ENCODE measurements at regions of chr4 and their contacts with region 1.

Region 1: DNA sequence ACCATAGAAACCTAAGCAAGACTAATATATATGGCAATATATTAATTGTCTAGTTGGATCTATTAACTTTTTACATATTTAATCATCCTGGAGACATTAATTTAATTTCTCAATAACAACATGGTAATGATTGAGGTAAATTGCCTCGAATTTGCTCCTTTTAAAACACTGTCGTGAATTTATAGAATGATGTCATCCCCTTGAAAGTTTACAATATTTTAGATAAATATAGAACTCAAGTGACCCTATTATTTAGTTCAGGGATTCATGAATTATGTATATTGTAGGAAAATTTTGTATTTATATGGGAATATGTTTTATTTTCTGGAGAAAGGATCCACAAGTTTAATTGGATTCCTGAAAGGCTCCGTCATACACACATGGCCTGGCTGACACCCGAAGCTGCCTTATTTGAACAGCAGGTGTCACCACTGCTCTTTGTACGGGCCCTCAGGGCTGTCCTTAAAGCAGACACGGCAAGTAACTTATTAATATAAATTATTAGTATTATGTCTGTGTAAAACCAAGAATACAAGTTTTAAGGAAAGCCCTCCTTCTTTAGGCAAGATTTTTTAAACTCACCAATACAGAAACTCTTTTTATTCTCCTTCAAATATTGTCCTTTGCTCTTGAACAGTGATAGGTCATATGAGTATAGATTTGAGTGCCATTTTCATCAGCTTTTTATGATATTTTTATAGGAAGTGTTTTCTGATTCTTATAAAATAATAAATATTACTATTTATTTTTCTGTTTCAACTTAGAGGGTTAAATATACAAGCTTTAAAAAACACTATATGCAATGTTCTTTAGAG is 1.9 kb upstream of the PLRG1 start:
- DNase-seq: peak; percentile 39
- ATAC-seq: peak; percentile 59
- H3K4me3 Mint-ChIP-seq: no peak overlapping the region
- H3K27ac Mint-ChIP-seq: peak overlapping the region; percentile 18
- H3K4me1 Mint-ChIP-seq: peaks cover 26% of the 10 kb centered on the region
- H3K27me3 Mint-ChIP-seq: no peaks in the 10 kb centered on the region
- CTCF ChIP-seq: no peak

Region 2: DNA sequence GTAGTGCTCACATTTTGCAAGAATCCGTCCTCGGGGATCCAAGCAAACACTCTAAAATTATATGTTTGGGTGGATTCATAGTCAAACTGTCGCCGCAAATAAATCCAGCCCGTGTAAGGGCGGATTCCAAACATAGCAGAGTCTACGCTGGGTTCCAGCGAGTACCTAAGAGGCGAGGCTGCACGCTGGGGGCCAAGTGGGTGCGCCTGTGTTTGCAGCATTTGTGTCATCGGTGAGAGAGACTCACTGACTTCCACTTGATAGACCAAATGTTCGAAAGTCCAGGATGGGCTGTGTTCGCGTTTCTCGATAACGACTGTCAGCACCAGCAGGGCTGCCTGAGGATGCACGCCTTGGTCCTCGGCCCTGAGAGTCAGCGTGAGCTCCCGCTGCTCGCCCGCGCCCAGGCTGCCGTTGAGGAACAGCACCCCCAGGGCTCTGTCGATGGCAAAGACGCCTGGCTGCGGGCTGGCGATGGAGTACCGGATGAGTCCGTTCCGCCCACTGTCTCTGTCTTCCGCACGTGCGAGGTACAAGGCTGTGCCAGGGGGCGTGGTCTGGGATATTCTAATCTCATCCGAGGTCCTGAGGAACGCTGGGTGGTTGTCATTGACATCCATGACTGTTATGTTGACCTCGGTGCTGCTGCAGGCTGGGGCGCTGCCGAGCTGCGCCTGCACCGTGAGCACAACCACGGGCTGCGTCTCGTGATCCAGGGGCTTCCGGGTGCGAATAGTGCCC is 219.2 kb before region 1 on chr4:
- CTCF ChIA-PET with region 1: interaction called, 3 read pairs
- POLR2A ChIA-PET with region 1: interaction called, 3 read pairs
- intact Hi-C with region 1: loop called (anchors 2 kb)
- DNase-seq: peak; percentile 38
- ATAC-seq: peak; percentile 90
- H3K4me3 Mint-ChIP-seq: peak overlapping the region; percentile 85
- H3K27ac Mint-ChIP-seq: peak overlapping the region; percentile 64
- H3K4me1 Mint-ChIP-seq: peaks cover 11% of the 10 kb centered on the region
- H3K27me3 Mint-ChIP-seq: peaks cover 22% of the 10 kb centered on the region
- CTCF ChIP-seq: no peak

Region 3: DNA sequence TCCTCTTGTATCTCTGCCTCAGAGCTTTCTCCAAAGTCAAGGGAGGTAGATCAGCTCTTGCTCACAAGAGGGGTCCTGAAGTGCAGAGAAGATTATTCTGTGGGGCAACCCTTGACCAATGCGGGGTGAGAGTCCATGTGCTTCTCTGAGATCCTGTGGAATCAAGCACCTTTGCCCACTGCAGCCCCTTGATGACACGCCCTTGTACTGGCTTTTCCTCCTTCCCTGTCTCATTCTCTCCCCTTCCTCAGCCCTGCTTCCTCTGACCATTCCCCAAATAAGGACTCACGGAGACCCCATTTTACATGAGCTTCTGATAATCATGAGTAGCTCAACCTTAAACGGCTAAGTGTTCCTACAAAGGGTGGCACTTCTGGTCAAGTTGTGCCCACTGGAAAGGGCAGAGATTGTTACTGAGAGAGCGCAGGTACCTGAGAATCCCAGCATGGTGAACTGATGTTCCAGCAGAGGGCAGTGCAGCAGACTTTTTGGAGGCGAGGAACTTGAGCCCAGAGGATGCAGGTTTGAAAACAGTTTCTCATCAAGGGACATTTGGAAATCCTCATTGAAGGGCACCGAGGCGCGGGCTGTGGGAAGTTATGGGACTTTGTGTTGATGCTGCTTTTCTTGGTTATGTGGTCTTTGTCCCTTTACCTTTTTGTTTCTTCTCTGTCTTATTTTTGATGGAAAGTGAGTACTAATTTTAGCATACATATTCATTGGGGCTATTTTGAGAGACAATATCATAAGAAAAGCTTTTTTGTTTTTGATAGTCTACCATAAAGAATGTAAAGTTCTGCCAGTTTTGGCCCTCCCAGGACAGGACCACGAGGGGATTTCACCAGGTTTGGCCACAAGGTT is 430.3 kb after region 1 on chr4:
- CTCF ChIA-PET with region 1: no interaction called
- POLR2A ChIA-PET with region 1: no interaction called
- intact Hi-C with region 1: loop called (anchors 5 kb)
- DNase-seq: no peak
- ATAC-seq: no peak
- H3K4me3 Mint-ChIP-seq: no peak overlapping the region
- H3K27ac Mint-ChIP-seq: no peak overlapping the region
- H3K4me1 Mint-ChIP-seq: no peaks in the 10 kb centered on the region
- H3K27me3 Mint-ChIP-seq: no peaks in the 10 kb centered on the region
- CTCF ChIP-seq: no peak

Region 4: GRCh38 chr4:155371432-155372043 is 819.5 kb after region 1 on chr4:
- CTCF ChIA-PET with region 1: interaction called, 6 read pairs
- POLR2A ChIA-PET with region 1: interaction called, 4 read pairs
- intact Hi-C with region 1: loop called (anchors 1 kb)
- DNase-seq: no peak
- ATAC-seq: no peak
- H3K4me3 Mint-ChIP-seq: no peak overlapping the region
- H3K27ac Mint-ChIP-seq: no peak overlapping the region
- H3K4me1 Mint-ChIP-seq: peaks cover 8% of the 10 kb centered on the region
- H3K27me3 Mint-ChIP-seq: no peaks in the 10 kb centered on the region
- CTCF ChIP-seq: peak; percentile 64

Region 5: GRCh38 chr4:155787113-155787710 is 1235.1 kb after region 1 on chr4:
- CTCF ChIA-PET with region 1: no interaction called
- POLR2A ChIA-PET with region 1: no interaction called
- intact Hi-C with region 1: loop called (anchors 1 kb)
- DNase-seq: no peak
- ATAC-seq: peak; percentile 57
- H3K4me3 Mint-ChIP-seq: no peak overlapping the region
- H3K27ac Mint-ChIP-seq: no peak overlapping the region
- H3K4me1 Mint-ChIP-seq: no peaks in the 10 kb centered on the region
- H3K27me3 Mint-ChIP-seq: no peaks in the 10 kb centered on the region
- CTCF ChIP-seq: peak; percentile 17